PC-3 (cell line): ENCODE measurements at regions of chr19 and their contacts with region 1.

Region 1: GRCh38 chr19:49502866-49503581 is 6.8 kb downstream of the RPS11 start:
- DNase-seq: peak; percentile 83
- ATAC-seq: peak; percentile 68
- H3K4me3 ChIP-seq: no peak overlapping the region
- H3K27ac ChIP-seq: no peak overlapping the region
- H3K4me1 ChIP-seq: peaks cover 11% of the 10 kb centered on the region
- H3K27me3 ChIP-seq: no peaks in the 10 kb centered on the region
- CTCF ChIP-seq: peak; percentile 78

Region 2: GRCh38 chr19:49255674-49256073 is 247.3 kb before region 1 on chr19:
- CTCF ChIA-PET with region 1: no interaction called
- POLR2A ChIA-PET with region 1: no interaction called
- intact Hi-C with region 1: no loop called
- DNase-seq: no peak
- ATAC-seq: no peak
- H3K4me3 ChIP-seq: no peak overlapping the region
- H3K27ac ChIP-seq: no peak overlapping the region
- H3K4me1 ChIP-seq: no peaks in the 10 kb centered on the region
- H3K27me3 ChIP-seq: peaks cover 31% of the 10 kb centered on the region; the same call in 1 of the 2 replicates
- CTCF ChIP-seq: no peak

Region 3: DNA sequence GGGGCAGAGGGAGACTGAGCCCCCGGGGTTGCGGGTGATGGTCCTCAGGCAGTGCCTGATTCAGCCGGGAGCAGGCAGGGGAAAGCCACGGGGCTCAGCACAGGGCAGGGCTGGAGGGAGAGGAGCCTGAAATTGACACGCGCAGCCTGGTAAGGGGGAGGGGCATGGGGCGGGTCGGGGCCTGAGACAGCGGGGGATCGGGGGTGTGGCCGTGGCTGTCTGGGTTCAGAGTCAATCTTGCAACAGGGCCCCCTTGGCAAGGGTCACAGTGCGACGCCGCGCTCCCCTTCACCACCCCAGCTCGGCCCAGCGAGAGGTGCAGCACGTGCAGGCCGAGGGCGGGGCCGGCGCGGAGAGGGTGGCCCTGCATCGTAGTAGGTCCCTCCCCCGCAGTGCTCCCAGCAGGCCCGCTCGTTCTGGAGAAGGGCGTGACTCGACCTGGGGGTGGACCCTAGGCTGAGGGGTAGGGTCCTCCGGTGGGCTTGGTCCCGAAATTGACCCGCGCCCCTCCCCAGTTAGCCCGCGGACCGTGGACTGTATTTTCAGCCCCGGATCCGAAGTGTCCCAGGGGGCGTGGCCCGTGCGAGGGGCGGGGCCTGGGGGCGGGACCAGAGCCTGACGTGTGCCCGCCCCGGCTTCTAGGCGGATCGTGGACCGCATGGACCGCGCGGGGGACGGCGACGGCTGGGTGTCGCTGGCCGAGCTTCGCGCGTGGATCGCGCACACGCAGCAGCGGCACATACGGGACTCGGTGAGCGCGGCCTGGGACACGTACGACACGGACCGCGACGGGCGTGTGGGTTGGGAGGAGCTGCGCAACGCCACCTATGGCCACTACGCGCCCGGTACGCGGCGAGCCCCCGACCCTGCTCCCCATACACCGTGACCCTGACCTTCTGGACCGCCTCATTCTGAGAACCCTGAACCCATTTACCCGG is 30.8 kb after region 1 on chr19:
- CTCF ChIA-PET with region 1: interaction called, 13 read pairs
- POLR2A ChIA-PET with region 1: no interaction called
- intact Hi-C with region 1: no loop called
- DNase-seq: peak; percentile 68
- ATAC-seq: peak; percentile 87
- H3K4me3 ChIP-seq: peak overlapping the region; percentile 84
- H3K27ac ChIP-seq: no peak overlapping the region
- H3K4me1 ChIP-seq: peaks cover 11% of the 10 kb centered on the region; the same call in 1 of the 2 replicates
- H3K27me3 ChIP-seq: no peaks in the 10 kb centered on the region
- CTCF ChIP-seq: peak; percentile 51

Region 4: GRCh38 chr19:49546825-49547565 is 44.0 kb after region 1 on chr19:
- CTCF ChIA-PET with region 1: interaction called, 21 read pairs
- POLR2A ChIA-PET with region 1: no interaction called
- intact Hi-C with region 1: loop called (anchors 1 kb)
- DNase-seq: peak; percentile 99
- ATAC-seq: peak; percentile 90
- H3K4me3 ChIP-seq: peak overlapping the region; percentile 31
- H3K27ac ChIP-seq: peak overlapping the region; percentile 42
- H3K4me1 ChIP-seq: peaks cover 8% of the 10 kb centered on the region; the same call in 1 of the 2 replicates
- H3K27me3 ChIP-seq: no peaks in the 10 kb centered on the region
- CTCF ChIP-seq: peak; percentile 97

Region 5: GRCh38 chr19:49570138-49570856 is 67.3 kb after region 1 on chr19:
- CTCF ChIA-PET with region 1: interaction called, 4 read pairs
- POLR2A ChIA-PET with region 1: no interaction called
- intact Hi-C with region 1: loop called (anchors 1 kb)
- DNase-seq: peak; percentile 92
- ATAC-seq: peak; percentile 75
- H3K4me3 ChIP-seq: no peak overlapping the region
- H3K27ac ChIP-seq: no peak overlapping the region
- H3K4me1 ChIP-seq: peaks cover 16% of the 10 kb centered on the region; the same call in 1 of the 2 replicates
- H3K27me3 ChIP-seq: no peaks in the 10 kb centered on the region
- CTCF ChIP-seq: peak; percentile 99

Region 6: GRCh38 chr19:49746206-49747091 is 243.4 kb after region 1 on chr19:
- CTCF ChIA-PET with region 1: no interaction called
- POLR2A ChIA-PET with region 1: no interaction called
- intact Hi-C with region 1: no loop called
- DNase-seq: peak; percentile 46
- ATAC-seq: peak; percentile 50
- H3K4me3 ChIP-seq: no peak overlapping the region
- H3K27ac ChIP-seq: no peak overlapping the region
- H3K4me1 ChIP-seq: no peaks in the 10 kb centered on the region
- H3K27me3 ChIP-seq: no peaks in the 10 kb centered on the region
- CTCF ChIP-seq: 0 out of 2 replicates have a peak, but pooled peaks have one; percentile 20